HepG2 (cell line): ENCODE measurements at regions of chr3 and their contacts with region 1.

Region 1: GRCh38 chr3:185282696-185283394 is 29.0 kb upstream of the EHHADH start:
- DNase-seq: peak; percentile 94
- ATAC-seq: peak; percentile 100
- H3K4me3 ChIP-seq: peak overlapping the region; percentile 84 to 87 (median 86)
- H3K27ac ChIP-seq: peak overlapping the region; percentile 52
- H3K4me1 ChIP-seq: peaks cover 35% of the 10 kb centered on the region
- H3K27me3 ChIP-seq: no peaks in the 10 kb centered on the region; a peak in 2 of 5 replicates
- CTCF ChIP-seq: no peak; the same call in 1 of the 2 replicates
- EP300 ChIP-seq: no peak
- POLR2A ChIP-seq: peak; percentile 46 to 82; a peak in 3 of 4 replicates
- RAD21 ChIP-seq: no peak

Region 2: DNA sequence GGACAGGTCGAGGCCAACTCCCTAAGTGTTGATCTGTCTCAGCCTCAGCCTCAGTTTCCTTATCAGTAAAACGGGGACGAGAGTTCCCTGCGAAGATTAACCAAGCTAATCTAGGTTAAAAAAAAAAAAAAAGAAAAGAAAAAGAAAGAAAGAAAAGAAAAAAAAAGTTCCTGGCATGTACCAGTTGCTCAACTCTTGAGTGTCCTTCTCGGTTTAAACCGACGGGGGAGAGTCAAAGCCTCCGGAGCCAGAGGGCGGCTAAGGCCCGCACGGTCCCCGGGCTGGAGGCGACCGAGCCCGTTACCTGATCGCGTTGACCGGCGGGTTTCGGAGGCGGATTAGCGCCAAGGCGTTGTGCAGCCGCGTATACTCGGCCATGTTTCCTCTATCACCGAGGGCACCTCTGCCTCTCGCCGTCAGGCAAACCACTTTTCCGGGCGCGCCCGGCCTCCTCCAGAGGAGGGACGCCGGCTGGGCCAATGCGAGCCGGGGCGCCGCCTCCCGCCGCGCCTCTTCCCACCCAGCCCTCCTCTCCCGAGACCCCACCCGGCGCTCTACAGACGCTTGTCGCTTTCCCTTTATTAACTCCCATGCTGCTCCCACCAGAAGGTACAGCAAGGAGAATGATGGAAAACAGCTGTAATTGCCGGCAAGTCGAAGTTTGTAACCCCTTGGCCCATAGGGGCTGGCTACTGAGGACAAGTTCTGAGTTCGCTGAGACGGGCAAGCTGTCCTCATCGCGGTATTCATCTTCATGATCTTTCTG is 29.0 kb before region 1 on chr3 and contains the start of gene EHHADH:
- CTCF ChIA-PET with region 1: no interaction called
- POLR2A ChIA-PET with region 1: no interaction called
- in situ Hi-C with region 1: no loop called
- intact Hi-C with region 1: loop called (anchors 2 kb)
- DNase-seq: peak; percentile 64
- ATAC-seq: peak; percentile 99
- H3K4me3 ChIP-seq: peak within 1 kb of the TSS; percentile 94 to 98 (median 97)
- H3K27ac ChIP-seq: peak within 1 kb of the TSS; percentile 99
- H3K4me1 ChIP-seq: peaks cover 51% of the 10 kb centered on the region
- H3K27me3 ChIP-seq: peaks cover 0 to 2% of the 10 kb centered on the region in 2 experiments; a peak in 2 of 5 replicates
- CTCF ChIP-seq: 0 out of 2 replicates have a peak, but pooled peaks have one; percentile 11
- EP300 ChIP-seq: no peak
- POLR2A ChIP-seq: peak; percentile 96 to 98
- RAD21 ChIP-seq: peak; percentile 40; the same call in 1 of the 2 replicates
- total RNA-seq, gene EHHADH: 38.9 and 59.1 TPM in 2 replicates